CD4-positive, alpha-beta memory T cell (primary cell): ENCODE measurements at regions of chr2 and their contacts with region 1.

Region 1: DNA sequence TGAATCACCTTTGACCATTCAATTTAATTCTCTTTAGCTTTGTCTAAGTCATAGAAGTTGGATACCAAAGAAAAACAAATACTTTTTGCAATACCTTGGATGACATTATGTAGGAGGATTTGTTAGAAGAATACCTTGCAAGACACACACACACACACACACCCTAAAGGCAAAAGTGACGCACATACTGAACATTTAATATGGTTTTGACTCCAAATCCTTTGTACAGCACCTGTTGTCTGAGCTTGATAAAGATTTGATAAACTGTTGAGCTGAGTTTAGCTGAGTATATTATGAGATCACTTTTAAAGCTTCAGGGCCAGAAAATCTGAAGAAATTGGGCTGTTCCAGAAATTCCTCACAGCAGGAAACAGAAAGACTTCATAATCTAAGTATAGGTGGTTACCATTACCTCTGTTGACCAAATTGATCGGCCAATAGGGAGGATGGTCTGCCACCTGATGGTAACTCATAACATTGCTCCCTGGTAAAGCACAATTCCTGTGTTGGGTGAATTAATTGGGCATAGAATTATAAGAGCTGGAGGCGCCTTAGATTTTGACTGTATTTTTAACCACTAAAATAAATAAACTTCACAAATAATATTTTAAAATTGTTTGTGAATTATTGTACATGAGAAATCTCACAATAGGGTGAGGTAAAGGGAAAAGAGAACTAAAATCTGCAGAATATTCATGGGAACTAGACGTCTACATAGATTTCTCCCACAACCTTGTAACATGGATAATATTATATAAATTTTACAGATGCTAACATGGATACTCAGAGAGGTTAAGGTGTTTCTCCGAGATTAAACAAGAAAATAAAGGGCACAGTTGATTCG is 21.9 kb upstream of the RPIA start:
- DNase-seq: peak in 3 of 5 donors; percentile 11 to 20 (median 19)
- H3K4me3 ChIP-seq: no peak overlapping the region
- H3K4me3 Mint-ChIP-seq: no peak overlapping the region
- H3K27ac ChIP-seq: no peak overlapping the region
- H3K27ac Mint-ChIP-seq: no peak overlapping the region
- H3K4me1 ChIP-seq: no peaks in the 10 kb centered on the region
- H3K4me1 Mint-ChIP-seq: peaks cover 0 to 2% (median 0%) of the 10 kb centered on the region in 4 donors
- H3K27me3 ChIP-seq: no peaks in the 10 kb centered on the region
- H3K27me3 Mint-ChIP-seq: no peaks in the 10 kb centered on the region

Region 2: GRCh38 chr2:88590998-88591613 is 78.5 kb before region 1 on chr2:
- CTCF ChIA-PET with region 1: interaction called, 137 read pairs
- POLR2A ChIA-PET with region 1: no interaction called
- intact Hi-C with region 1: loop called (anchors 1 kb)
- DNase-seq: peak; percentile 34 to 58 (median 43)
- H3K4me3 ChIP-seq: no peak overlapping the region
- H3K4me3 Mint-ChIP-seq: no peak overlapping the region
- H3K27ac ChIP-seq: no peak overlapping the region
- H3K27ac Mint-ChIP-seq: peak overlapping the region in 4 of 7 donors; percentile 12 to 78 (median 40)
- H3K4me1 ChIP-seq: no peaks in the 10 kb centered on the region
- H3K4me1 Mint-ChIP-seq: no peaks in the 10 kb centered on the region
- H3K27me3 ChIP-seq: no peaks in the 10 kb centered on the region
- H3K27me3 Mint-ChIP-seq: no peaks in the 10 kb centered on the region

Region 3: DNA sequence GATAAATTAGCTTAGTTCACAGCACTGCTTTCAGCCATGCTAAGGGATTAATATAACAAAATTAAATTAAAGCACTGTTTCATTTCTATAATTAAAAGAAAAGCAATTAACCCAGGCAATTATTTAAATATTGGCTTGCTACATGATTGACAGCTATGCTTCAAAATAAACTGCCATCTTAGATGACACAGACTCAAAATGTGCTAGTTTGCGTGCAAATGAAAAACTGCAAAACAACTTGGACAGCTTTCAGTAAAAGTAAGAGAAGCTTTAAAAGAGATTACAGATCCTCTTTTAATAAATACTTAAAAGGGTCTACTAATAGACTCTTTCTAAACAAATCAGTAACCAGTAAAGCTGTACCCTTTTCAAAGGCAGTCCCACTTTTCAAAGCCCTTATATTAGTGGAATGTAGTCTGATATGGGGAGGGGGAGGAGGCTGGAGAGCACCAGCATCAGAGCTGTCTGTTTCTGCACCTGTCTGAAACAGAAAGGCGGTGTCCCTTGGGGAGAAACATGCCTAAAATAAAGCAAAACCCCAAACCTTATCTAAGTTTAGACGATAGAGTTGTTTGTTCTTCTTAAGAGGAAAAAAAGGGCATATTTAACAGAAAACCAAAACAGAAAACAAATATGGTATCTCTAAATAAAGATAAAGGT is 63.1 kb before region 1 on chr2:
- CTCF ChIA-PET with region 1: interaction called, 13 read pairs
- POLR2A ChIA-PET with region 1: no interaction called
- intact Hi-C with region 1: no loop called
- DNase-seq: no peak
- H3K4me3 ChIP-seq: no peak overlapping the region
- H3K4me3 Mint-ChIP-seq: no peak overlapping the region
- H3K27ac ChIP-seq: no peak overlapping the region
- H3K27ac Mint-ChIP-seq: peak overlapping the region in 2 of 7 donors; percentile 41 to 70
- H3K4me1 ChIP-seq: no peaks in the 10 kb centered on the region
- H3K4me1 Mint-ChIP-seq: peaks cover 16 to 22% (median 19%) of the 10 kb centered on the region in 4 donors
- H3K27me3 ChIP-seq: no peaks in the 10 kb centered on the region
- H3K27me3 Mint-ChIP-seq: no peaks in the 10 kb centered on the region

Region 4: GRCh38 chr2:88627056-88627855 is 42.3 kb before region 1 on chr2 and contains the start of gene EIF2AK3:
- CTCF ChIA-PET with region 1: interaction called, 9 read pairs
- POLR2A ChIA-PET with region 1: no interaction called
- intact Hi-C with region 1: loop called (anchors 5 kb)
- DNase-seq: peak; percentile 95 to 99 (median 99)
- H3K4me3 ChIP-seq: peak within 1 kb of the TSS; percentile 83 to 89
- H3K4me3 Mint-ChIP-seq: peak within 1 kb of the TSS; percentile 92 to 98 (median 96)
- H3K27ac ChIP-seq: peak within 1 kb of the TSS; percentile 92
- H3K27ac Mint-ChIP-seq: peak within 1 kb of the TSS in 6 of 7 donors; percentile 94 to 98 (median 96)
- H3K4me1 ChIP-seq: peaks cover 36% of the 10 kb centered on the region
- H3K4me1 Mint-ChIP-seq: peaks cover 0 to 25% (median 13%) of the 10 kb centered on the region in 4 donors
- H3K27me3 ChIP-seq: no peaks in the 10 kb centered on the region
- H3K27me3 Mint-ChIP-seq: no peaks in the 10 kb centered on the region
- total RNA-seq, gene EIF2AK3: 30.9 to 31.0 TPM

Region 5: DNA sequence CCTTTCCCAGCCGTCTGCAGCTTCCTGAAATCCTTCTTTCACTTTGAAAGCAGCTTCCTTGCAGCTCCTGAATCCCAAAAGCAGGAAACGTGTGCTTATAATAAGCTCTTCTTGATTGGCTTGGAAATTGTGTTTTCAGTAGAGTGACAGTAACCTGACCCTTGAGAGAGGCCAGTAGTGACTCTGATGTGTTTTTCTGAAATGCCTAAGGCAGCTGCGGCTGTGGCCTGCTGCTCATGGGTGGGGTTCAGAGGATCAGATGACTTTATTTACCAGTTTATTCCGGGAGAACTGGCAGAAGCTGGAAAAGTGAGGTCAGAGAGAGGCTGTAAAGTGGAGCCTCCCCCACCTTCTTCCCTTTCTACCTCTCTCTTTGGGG is 10.1 kb before region 1 on chr2:
- CTCF ChIA-PET with region 1: interaction called, 29 read pairs
- POLR2A ChIA-PET with region 1: no interaction called
- intact Hi-C with region 1: no loop called
- DNase-seq: no peak
- H3K4me3 ChIP-seq: no peak overlapping the region
- H3K4me3 Mint-ChIP-seq: no peak overlapping the region
- H3K27ac ChIP-seq: no peak overlapping the region
- H3K27ac Mint-ChIP-seq: no peak overlapping the region
- H3K4me1 ChIP-seq: no peaks in the 10 kb centered on the region
- H3K4me1 Mint-ChIP-seq: no peaks in the 10 kb centered on the region
- H3K27me3 ChIP-seq: no peaks in the 10 kb centered on the region
- H3K27me3 Mint-ChIP-seq: peaks cover 0 to 1% of the 10 kb centered on the region in 2 donors